GM18951 (cell line): ENCODE measurements at regions of chr6 and their contacts with region 1.

Region 1: DNA sequence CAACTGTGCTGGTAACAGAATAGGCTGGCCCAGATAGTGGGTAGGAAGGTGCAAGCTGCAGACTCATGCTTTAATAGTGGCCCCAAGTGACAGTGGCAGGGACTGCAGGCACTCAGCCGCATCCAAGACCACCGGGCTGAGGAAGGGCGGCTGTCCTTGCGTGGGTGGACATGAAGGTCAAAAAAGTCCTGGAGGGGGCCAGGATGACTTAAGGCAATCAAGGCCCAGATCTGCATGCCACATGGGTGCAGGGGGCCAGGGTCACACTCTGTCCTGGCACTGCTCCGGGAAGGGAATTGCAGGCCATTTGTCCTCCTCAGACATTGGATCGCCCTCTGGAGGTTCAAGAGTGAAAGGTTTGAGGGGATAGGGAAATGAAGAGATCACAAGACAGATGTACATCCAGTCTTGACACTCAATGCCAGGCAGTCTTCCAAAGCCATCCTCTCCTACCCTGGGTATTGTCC is 10.4 kb upstream of the VNN2 start:
- POLR2A ChIP-seq: no peak

Region 2: DNA sequence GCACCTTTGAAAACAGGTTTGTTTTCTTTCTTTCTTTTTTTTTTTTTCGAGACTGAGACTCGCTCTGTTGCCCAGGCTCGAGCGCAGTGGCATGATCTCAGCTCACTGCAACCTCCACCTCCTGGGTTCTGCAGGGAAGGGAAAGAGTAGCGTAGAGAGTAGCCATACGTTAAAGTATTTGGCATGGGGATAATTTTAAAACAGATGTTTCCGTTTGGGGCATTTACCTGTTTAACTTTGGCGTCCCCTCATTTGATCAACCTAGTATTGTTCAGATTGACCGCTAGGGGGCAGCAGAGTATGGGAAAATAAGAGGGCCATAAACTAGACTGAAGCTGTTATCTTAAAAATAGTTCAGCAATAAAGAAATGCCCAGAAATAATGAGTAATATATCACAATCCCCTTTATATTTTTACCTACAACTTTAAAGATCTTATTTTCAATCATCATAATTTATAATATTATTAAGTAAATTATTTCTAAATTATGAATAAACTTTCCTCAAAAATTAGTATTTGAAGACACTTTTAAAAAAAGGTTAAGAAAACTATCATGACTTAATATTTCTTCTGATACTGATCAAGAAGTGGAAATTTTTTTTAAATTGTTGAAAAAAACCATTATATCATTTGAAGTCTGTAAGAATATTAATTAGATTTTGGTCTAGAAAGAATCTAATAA is 237.7 kb before region 1 on chr6:
- in situ Hi-C with region 1: loop called (anchors 10 kb)
- POLR2A ChIP-seq: no peak

Region 3: GRCh38 chr6:132669690-132670291 is 98.3 kb before region 1 on chr6:
- in situ Hi-C with region 1: loop called (anchors 5 kb)
- POLR2A ChIP-seq: no peak